ENCODE measurements at regions of chr19 and their contacts with region 1.

Region 1: DNA sequence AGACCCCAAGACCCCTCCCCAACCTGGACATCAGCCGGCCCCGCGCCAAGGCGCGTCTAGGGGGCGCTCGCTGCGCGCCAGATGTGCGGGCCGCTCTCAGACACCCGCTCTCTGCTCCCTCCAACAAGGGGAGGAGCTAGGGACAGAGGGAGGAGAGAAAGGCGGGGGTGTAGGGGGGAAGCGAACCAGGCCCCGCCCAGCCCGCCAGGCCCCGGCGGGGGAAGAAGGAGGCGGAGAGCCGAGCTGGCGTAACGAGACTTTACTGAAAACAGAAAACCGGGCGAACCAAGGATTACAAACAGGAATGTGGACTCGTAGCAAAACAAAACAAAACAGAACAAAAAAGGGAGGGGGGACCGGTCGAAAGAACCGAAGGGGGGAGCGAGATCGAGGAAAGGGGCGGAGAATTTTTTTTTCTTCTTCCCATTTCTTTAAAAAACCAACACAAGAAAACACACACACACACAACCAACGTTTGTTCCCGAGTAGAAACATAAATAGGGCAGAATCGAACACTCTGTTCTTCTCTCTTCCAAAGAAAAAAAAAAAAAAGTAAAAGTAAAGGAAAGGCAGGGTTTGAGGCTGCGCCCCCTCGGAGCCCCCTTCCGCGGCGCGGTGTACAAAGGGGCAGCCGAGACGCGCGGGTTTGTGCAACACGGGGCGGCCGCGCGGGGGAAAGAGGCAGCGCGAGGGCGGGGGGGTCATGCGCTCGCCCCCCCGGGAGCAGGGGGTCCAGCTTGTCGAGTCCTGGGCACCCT is 1.7 kb downstream of the JUND start:
- DNase-seq: peak; percentile 99
- H3K4me3 ChIP-seq: peak overlapping the region; percentile 86 to 100 (median 99)
- H3K27ac ChIP-seq: peak overlapping the region; percentile 99 to 100 (median 100)
- H3K4me1 ChIP-seq: peaks cover 53 to 64% (median 63%) of the 10 kb centered on the region in 4 donors
- H3K27me3 ChIP-seq: no peaks in the 10 kb centered on the region
- CTCF ChIP-seq: peak; percentile 85 to 99 (median 90)
- EP300 ChIP-seq: no peak
- POLR2A ChIP-seq: peak; percentile 93

Region 2: DNA sequence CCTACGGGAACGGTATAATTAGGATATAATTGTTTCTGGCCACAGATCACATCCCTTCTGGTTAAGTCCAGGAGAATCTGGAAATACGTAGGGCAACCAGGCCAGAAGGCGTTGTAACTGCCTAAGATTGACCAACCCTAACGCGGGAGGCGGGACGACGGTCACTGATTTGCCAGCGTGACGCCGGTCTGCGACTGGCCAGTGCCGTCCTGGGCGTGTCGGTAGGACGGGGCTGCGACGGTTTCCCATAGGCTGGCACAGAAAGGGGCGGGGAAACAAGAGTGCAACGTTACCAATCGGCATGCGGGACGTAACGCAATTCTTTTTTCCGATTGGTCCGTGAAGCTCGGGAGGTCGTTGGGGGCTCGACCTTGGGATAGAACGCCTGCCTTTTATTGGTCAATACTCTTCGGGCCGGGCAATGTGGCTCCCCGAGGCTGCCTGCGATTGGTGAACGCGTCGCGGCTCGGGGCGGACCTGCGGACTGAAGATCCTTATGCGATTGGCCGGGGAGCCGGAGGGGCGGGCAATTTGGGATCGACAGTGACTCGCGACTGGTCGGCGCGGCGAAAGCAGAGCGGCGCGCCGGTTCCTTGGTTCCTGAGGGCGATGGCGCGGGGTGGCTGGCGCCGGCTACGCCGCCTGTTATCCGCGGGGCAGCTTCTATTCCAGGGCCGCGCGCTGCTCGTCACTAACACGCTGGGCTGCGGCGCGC is 86.9 kb before region 1 on chr19 and contains the start of gene MPV17L2:
- intact Hi-C with region 1: no loop called
- DNase-seq: peak; percentile 100
- H3K4me3 ChIP-seq: peak within 1 kb of the TSS; percentile 66 to 87 (median 78)
- H3K27ac ChIP-seq: peak within 1 kb of the TSS; percentile 96 to 99 (median 97)
- H3K4me1 ChIP-seq: peaks cover 19 to 37% (median 31%) of the 10 kb centered on the region in 4 donors
- H3K27me3 ChIP-seq: no peaks in the 10 kb centered on the region
- CTCF ChIP-seq: peak in 1 of 3 experiments; percentile 47
- EP300 ChIP-seq: no peak
- POLR2A ChIP-seq: peak; percentile 52
- total RNA-seq, gene MPV17L2: 14.5 to 67.6 (median 21.2) TPM

Region 3: DNA sequence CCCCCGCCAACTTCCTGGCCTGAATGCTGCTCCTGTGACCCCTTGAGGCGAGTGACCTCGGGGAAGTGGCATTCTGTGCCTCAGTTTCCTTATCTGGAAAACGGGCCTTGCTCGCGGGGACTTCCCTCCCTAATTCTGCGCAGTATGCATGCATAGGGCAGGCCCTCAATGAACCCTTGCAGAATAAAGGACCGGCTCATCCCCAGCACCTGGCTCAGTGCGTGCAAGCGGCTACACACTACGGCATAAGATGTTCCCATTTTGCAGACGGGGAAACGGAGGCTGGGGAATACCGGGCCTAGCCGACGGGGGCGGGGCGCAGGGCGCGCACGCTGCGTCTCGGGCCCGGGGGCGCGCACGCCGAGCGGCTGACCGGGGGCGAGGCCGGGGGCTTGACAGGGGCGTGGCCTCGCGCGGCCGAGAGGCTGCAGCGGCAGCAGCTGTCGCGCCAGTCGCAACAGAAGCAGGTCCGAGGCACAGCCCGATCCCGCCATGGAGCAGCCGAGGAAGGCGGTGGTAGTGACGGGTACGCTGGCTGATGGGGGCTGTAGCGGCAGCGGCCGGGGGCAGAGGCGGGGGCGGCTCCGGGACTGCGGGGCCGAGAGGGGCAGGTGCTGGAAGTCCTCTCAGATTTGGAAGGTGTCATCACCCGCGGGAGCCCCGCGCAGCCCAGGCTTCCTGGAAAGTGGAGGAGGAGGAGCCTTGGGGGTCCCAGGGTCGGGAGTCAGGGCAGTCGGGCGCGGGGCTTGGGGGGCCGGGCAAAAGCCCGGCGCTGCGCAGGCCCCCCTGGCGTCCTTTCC is 60.7 kb after region 1 on chr19 and contains the start of gene PGPEP1:
- intact Hi-C with region 1: loop called (anchors 5 kb)
- DNase-seq: no peak
- H3K4me3 ChIP-seq: peak within 1 kb of the TSS; percentile 84 to 91 (median 88)
- H3K27ac ChIP-seq: peak within 1 kb of the TSS; percentile 77 to 91 (median 86)
- H3K4me1 ChIP-seq: peaks cover 15 to 40% (median 28%) of the 10 kb centered on the region in 4 donors
- H3K27me3 ChIP-seq: no peaks in the 10 kb centered on the region
- CTCF ChIP-seq: peak in 1 of 3 experiments; percentile 10
- EP300 ChIP-seq: no peak
- POLR2A ChIP-seq: no peak
- total RNA-seq, gene PGPEP1: 15.0 to 50.3 (median 28.0) TPM

Region 4: DNA sequence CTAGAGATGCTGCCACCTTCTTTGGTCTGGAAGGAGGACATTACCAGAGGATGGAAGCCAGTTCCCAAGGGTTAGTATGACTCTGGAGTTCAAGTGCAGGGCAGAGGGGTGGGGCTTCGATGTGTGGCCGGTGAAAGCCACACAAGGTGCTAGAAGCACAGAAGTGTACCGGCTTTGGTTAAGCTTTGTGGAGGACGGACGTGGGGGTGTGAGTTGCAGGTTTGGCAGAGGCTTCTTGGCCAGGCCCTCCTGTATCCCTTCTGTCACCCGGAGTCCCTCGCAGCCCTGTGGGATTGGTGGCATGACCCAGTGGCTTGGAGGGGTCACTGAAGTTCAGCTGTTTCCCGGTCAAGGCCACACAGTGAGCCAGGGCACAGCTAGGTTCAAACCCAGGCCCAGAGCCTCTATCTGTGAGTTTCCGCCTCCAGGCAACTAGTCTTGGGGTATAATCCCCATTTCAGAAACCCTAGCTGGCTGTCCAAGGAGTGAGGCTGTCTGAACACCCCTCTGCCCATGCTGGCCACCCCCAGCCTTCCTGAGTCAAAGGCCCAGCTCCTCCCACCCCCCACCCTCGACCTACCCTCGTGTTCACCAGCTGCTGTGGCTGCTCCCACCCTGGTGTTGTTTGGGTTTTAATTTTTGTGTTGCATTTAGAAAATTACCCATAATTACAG is 134.9 kb after region 1 on chr19:
- intact Hi-C with region 1: loop called (anchors 5 kb)
- DNase-seq: no peak
- H3K4me3 ChIP-seq: peak overlapping the region; percentile 32 to 53 (median 39)
- H3K27ac ChIP-seq: peak overlapping the region; percentile 86 to 88 (median 88)
- H3K4me1 ChIP-seq: peaks cover 47 to 60% (median 54%) of the 10 kb centered on the region in 4 donors
- H3K27me3 ChIP-seq: no peaks in the 10 kb centered on the region
- CTCF ChIP-seq: no peak
- EP300 ChIP-seq: no peak
- POLR2A ChIP-seq: no peak

Measured in esophagus muscularis mucosa (tissue), 4 donors.